GM12878 (cell line): ENCODE measurements at regions of chr12 and their contacts with region 1.

Region 1: DNA sequence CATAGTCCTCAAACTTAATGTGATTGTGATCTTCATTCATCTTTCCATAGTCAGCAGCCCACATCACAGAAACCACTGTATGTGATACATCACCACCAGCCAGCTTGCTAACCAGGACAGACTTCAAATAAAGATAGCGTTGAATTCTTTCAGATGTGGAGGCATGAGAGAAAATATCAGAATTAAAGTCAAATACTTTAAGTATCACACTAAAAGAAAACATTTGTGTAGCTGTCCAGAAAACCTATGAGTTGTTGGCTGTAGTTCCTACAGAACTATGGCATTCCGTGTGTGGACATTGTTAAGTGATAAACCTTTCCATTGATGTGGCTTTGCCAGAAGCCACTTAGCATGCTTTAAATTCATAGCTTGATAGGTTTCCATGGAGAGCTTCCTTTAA is 105.1 kb downstream of the LLPH start:
- DNase-seq: no peak
- ATAC-seq: no peak
- H3K4me3 ChIP-seq: no peak overlapping the region
- H3K27ac ChIP-seq: no peak overlapping the region
- H3K4me1 ChIP-seq: no peaks in the 10 kb centered on the region
- H3K27me3 ChIP-seq: no peaks in the 10 kb centered on the region
- CTCF ChIP-seq: no peak
- EP300 ChIP-seq: no peak
- POLR2A ChIP-seq: no peak
- RAD21 ChIP-seq: no peak

Region 2: DNA sequence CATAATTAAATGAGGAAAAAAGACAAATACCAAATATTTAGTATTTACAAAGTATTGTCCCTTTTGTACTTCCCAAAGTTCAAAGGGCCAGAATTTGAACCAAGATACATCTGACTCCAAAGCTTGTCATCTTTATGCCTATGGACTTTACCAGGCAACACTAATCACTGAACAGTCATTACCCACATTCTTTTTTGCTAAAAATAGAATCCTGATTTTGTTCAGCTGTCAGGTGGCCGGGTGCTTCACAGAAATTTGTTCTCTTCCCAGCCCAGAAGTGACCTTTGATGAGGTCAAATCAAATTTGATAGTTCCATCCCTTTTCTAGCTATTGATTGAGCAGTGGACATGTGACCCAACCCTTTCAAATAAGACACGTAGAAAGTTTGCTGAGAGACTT is 16.5 kb before region 1 on chr12:
- CTCF ChIA-PET with region 1: interaction called, 3 read pairs
- POLR2A ChIA-PET with region 1: interaction called, 5 read pairs
- RAD21 ChIA-PET with region 1: interaction called, 5 read pairs
- SMC1A ChIA-PET with region 1: interaction called, 10 read pairs
- in situ Hi-C with region 1: no loop called
- intact Hi-C with region 1: no loop called
- DNase-seq: no peak
- ATAC-seq: peak; percentile 68
- H3K4me3 ChIP-seq: no peak overlapping the region
- H3K27ac ChIP-seq: no peak overlapping the region
- H3K4me1 ChIP-seq: peaks cover 8% of the 10 kb centered on the region
- H3K27me3 ChIP-seq: no peaks in the 10 kb centered on the region
- CTCF ChIP-seq: no peak
- EP300 ChIP-seq: no peak
- POLR2A ChIP-seq: no peak
- RAD21 ChIP-seq: no peak